ENCODE measurements at regions of chr10 and their contacts with region 1.

Region 1: DNA sequence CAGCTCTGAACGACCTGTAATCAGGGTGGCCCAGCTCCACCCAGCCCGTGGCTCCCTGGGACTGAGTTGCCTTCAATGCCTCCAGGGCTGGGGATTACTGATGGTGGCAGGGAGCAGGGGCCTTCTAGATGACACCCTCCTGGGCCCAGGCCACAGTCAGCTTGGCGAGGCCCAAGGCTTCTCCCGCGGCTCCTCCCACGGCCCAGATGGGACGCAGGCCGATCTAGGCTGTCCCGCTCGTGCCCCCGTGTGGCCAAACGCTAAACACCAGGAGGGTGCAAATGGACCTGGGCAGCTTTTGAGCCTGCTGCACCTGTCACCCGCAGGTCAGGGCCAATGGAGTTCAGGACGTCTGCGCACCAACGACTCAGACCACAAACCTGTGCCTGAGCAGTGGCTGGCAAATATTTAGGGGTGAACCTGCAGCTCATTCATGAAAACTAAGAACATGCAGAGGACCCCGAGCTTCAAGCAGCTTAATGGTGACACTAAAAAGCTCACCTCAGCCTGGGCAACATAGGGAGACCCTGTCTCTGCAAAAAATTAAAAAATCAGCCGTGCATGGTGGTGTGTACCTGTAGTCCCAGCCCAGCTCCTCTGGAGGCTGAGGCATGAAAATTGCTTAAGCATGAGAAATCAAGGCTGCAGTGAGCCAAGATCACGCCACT is 43.2 kb downstream of the ASB13 start:
- DNase-seq: peak; percentile 75
- H3K4me3 ChIP-seq: no peak overlapping the region
- H3K27ac ChIP-seq: no peak overlapping the region
- H3K4me1 ChIP-seq: no peaks in the 10 kb centered on the region
- H3K27me3 ChIP-seq: no peaks in the 10 kb centered on the region
- CTCF ChIP-seq: peak; percentile 89 to 94
- POLR2A ChIP-seq: no peak

Region 2: DNA sequence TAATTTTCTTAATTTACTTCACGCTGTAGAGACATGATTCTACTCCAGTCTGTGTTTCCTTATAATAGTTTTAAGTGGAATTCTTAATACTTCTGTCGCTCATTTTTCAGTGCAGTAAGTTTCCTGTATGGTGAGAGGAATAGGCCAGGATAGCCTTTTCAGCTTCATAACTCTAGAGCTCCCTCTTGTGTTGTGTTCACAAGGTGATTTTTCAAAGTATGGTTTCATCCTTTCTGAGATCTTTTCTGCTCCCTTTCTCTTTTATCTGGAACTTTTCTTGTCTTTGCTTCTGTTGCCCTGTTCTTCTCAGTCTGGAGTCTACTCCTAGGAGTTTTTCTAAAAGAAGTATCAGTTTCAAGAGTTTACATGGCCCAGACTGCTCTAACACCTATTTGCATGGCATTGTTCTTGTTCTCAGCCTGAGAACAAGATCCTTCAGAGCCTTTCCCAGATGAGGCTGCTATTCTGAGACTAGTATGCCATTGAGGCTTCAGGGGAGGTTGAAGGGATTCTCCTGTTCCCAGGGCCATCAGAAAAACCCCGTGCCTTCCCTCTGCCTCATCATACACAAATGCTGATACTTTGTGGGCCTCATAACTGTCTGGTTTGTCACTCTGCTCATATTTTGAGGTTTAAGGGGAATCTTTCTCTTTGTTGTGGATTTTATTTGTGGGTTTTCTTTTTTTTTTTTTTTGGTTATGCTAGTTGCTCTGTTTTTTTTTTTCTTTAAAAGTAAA is 189.0 kb before region 1 on chr10:
- CTCF ChIA-PET with region 1: interaction called, 309 read pairs
- POLR2A ChIA-PET with region 1: no interaction called
- dilution Hi-C with region 1: no loop called
- intact Hi-C with region 1: no loop called
- DNase-seq: peak; percentile 67
- H3K4me3 ChIP-seq: no peak overlapping the region
- H3K27ac ChIP-seq: no peak overlapping the region
- H3K4me1 ChIP-seq: no peaks in the 10 kb centered on the region
- H3K27me3 ChIP-seq: no peaks in the 10 kb centered on the region
- CTCF ChIP-seq: peak; percentile 42 to 50
- POLR2A ChIP-seq: no peak

Region 3: DNA sequence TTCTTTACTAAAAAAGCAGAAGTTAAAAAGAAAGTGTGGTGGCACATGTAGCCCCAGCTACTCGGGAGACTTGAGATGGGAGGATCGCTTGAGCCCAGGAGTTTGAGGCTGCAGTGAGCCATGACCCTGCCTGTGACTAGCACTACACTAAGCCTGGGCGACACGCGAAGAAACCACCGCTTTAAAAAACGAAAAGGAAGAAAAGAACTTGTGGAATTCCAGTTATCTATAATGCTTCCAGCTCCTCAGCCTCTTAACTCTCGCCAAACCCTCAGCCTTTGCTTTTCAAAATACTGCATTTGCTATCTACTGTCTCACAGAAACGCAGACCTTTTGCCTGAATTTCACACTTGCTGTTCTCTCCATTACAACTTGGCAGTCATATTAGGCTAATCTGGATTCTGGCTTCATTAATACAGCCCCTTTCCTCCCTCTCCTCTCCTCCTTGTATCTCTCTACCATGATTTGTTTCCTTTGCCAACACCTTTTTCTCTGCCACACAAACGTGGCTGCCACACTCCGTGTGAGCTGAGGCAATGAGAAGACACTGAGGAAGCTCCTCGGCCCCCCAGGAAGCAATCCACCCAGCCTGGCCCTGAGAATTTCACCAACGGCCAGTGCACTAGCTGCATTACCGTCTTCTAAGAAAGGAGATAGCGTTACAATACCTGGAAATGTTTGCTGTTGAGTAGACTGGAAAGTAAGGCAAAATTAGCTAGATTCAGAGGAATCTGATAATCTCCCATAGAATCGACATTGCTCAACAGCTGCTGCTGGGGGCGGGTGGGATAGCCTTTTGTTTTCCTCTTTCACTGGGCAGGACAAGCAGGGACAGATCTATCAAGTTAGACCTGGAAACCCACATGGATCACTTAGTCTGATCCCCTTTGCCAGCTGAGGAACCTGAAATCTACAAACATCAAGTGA is 161.0 kb before region 1 on chr10:
- CTCF ChIA-PET with region 1: interaction called, 36 read pairs
- POLR2A ChIA-PET with region 1: no interaction called
- dilution Hi-C with region 1: no loop called
- intact Hi-C with region 1: no loop called
- DNase-seq: peak; percentile 32
- H3K4me3 ChIP-seq: no peak overlapping the region
- H3K27ac ChIP-seq: no peak overlapping the region
- H3K4me1 ChIP-seq: no peaks in the 10 kb centered on the region
- H3K27me3 ChIP-seq: no peaks in the 10 kb centered on the region
- CTCF ChIP-seq: no peak
- POLR2A ChIP-seq: no peak

Region 4: DNA sequence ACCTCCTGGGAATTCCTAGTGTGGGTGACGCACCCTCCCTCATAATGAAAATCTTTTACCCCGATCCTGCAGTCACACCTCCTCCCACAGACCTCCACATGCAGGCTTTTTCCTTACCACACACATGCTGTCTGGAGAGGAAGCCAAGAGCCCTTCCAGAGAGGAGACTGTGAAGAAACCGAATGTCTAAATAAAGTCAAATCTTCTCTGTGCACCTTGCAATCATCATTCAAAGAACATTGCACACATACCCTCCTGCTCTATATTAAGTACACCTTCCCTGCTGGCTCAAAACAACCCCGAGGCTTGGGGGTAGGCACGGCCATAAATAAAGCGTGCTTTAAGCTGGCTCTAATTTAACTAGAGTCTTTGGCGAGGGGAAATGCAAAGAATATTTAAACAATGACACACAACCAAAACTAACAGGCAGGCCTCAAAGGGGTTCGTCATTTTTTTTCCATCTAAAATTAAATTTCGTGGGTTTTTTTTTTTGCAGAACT is 63.5 kb before region 1 on chr10:
- CTCF ChIA-PET with region 1: interaction called, 12 read pairs
- POLR2A ChIA-PET with region 1: no interaction called
- dilution Hi-C with region 1: no loop called
- intact Hi-C with region 1: no loop called
- DNase-seq: peak; percentile 57
- H3K4me3 ChIP-seq: no peak overlapping the region
- H3K27ac ChIP-seq: peak overlapping the region; percentile 10
- H3K4me1 ChIP-seq: peaks cover 16% of the 10 kb centered on the region
- H3K27me3 ChIP-seq: no peaks in the 10 kb centered on the region
- CTCF ChIP-seq: no peak
- POLR2A ChIP-seq: no peak

Region 5: GRCh38 chr10:5595591-5596590 is 27.3 kb before region 1 on chr10:
- CTCF ChIA-PET with region 1: interaction called, 25 read pairs
- POLR2A ChIA-PET with region 1: interaction called, 3 read pairs
- dilution Hi-C with region 1: no loop called
- intact Hi-C with region 1: no loop called
- DNase-seq: peak; percentile 92
- H3K4me3 ChIP-seq: no peak overlapping the region
- H3K27ac ChIP-seq: peak overlapping the region; percentile 67
- H3K4me1 ChIP-seq: peaks cover 29% of the 10 kb centered on the region
- H3K27me3 ChIP-seq: no peaks in the 10 kb centered on the region
- CTCF ChIP-seq: no peak
- POLR2A ChIP-seq: peak; percentile 59

Region 6: GRCh38 chr10:6068422-6068821 is 445.2 kb after region 1 on chr10:
- CTCF ChIA-PET with region 1: no interaction called
- POLR2A ChIA-PET with region 1: no interaction called
- dilution Hi-C with region 1: no loop called
- intact Hi-C with region 1: no loop called
- DNase-seq: no peak
- H3K4me3 ChIP-seq: no peak overlapping the region
- H3K27ac ChIP-seq: no peak overlapping the region
- H3K4me1 ChIP-seq: no peaks in the 10 kb centered on the region
- H3K27me3 ChIP-seq: peaks cover 0 to 6% of the 10 kb centered on the region in 2 experiments
- CTCF ChIP-seq: no peak
- POLR2A ChIP-seq: no peak